ENCODE measurements at regions of chr1 and their contacts with region 1.

Region 1: GRCh38 chr1:242017584-242018233 is 18.8 kb upstream of the MAP1LC3C start:
- DNase-seq: peak in 1 of 2 experiments; percentile 50
- H3K4me3 ChIP-seq: no peak overlapping the region
- H3K27ac ChIP-seq: no peak overlapping the region
- H3K4me1 ChIP-seq: no peaks in the 10 kb centered on the region
- H3K27me3 ChIP-seq: no peaks in the 10 kb centered on the region
- CTCF ChIP-seq: peak; percentile 62

Region 2: GRCh38 chr1:240888039-240888786 is 1129.5 kb before region 1 on chr1:
- CTCF ChIA-PET with region 1: no interaction called
- POLR2A ChIA-PET with region 1: no interaction called
- intact Hi-C with region 1: loop called (anchors 5 kb)
- DNase-seq: peak in 1 of 2 experiments; percentile 47
- H3K4me3 ChIP-seq: no peak overlapping the region
- H3K27ac ChIP-seq: no peak overlapping the region
- H3K4me1 ChIP-seq: no peaks in the 10 kb centered on the region
- H3K27me3 ChIP-seq: no peaks in the 10 kb centered on the region
- CTCF ChIP-seq: peak; percentile 92

Region 3: GRCh38 chr1:241519308-241520079 is 498.2 kb before region 1 on chr1 and contains the start of gene FH:
- CTCF ChIA-PET with region 1: no interaction called
- POLR2A ChIA-PET with region 1: no interaction called
- intact Hi-C with region 1: loop called (anchors 5 kb)
- DNase-seq: peak; percentile 94 to 96
- H3K4me3 ChIP-seq: peak within 1 kb of the TSS; percentile 90
- H3K27ac ChIP-seq: peak within 1 kb of the TSS; percentile 39; the same call in 1 of the 2 replicates
- H3K4me1 ChIP-seq: peaks cover 26% of the 10 kb centered on the region
- H3K27me3 ChIP-seq: no peaks in the 10 kb centered on the region
- CTCF ChIP-seq: no peak
- total RNA-seq, gene FH: 56.1 and 88.3 TPM in 2 replicates

Region 4: GRCh38 chr1:241531195-241532161 is 486.2 kb before region 1 on chr1:
- CTCF ChIA-PET with region 1: no interaction called
- POLR2A ChIA-PET with region 1: no interaction called
- intact Hi-C with region 1: loop called (anchors 2 kb)
- DNase-seq: peak in 1 of 2 experiments; percentile 76
- H3K4me3 ChIP-seq: peak overlapping the region; percentile 44; the same call in 1 of the 2 replicates
- H3K27ac ChIP-seq: no peak overlapping the region
- H3K4me1 ChIP-seq: peaks cover 28% of the 10 kb centered on the region
- H3K27me3 ChIP-seq: no peaks in the 10 kb centered on the region
- CTCF ChIP-seq: peak; percentile 82

Region 5: GRCh38 chr1:241847796-241848685 is 169.7 kb before region 1 on chr1 and contains the start of gene EXO1:
- CTCF ChIA-PET with region 1: no interaction called
- POLR2A ChIA-PET with region 1: no interaction called
- intact Hi-C with region 1: loop called (anchors 5 kb)
- DNase-seq: peak; percentile 82 to 87
- H3K4me3 ChIP-seq: peak within 1 kb of the TSS; percentile 71
- H3K27ac ChIP-seq: peak within 1 kb of the TSS; percentile 87
- H3K4me1 ChIP-seq: peaks cover 17% of the 10 kb centered on the region
- H3K27me3 ChIP-seq: no peaks in the 10 kb centered on the region
- CTCF ChIP-seq: no peak; the same call in 1 of the 2 replicates
- total RNA-seq, gene EXO1: 28.6 and 32.1 TPM in 2 replicates

Region 6: DNA sequence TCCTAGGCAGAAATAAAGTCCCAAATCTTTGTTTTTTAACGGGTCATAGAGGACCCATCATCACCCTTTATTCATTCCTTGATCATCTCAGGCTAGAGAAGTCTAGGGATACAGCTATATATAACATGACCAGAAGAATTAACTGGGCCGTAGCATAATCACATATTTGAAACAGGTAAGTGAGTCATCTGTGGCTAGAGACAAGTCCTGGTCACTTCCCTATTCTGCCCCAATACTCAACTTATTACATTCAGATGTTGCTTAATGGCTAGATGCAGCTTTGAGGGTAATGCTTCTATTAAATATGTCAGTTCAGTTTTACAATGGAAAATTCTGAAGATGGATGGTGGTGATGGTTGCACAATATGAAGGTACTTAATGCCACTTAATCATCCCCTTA is 122.7 kb before region 1 on chr1:
- CTCF ChIA-PET with region 1: no interaction called
- POLR2A ChIA-PET with region 1: no interaction called
- intact Hi-C with region 1: loop called (anchors 1 kb)
- DNase-seq: peak in 1 of 2 experiments; percentile 92
- H3K4me3 ChIP-seq: no peak overlapping the region
- H3K27ac ChIP-seq: peak overlapping the region; percentile 29
- H3K4me1 ChIP-seq: peaks cover 14% of the 10 kb centered on the region; the same call in 1 of the 2 replicates
- H3K27me3 ChIP-seq: no peaks in the 10 kb centered on the region
- CTCF ChIP-seq: no peak

Region 7: DNA sequence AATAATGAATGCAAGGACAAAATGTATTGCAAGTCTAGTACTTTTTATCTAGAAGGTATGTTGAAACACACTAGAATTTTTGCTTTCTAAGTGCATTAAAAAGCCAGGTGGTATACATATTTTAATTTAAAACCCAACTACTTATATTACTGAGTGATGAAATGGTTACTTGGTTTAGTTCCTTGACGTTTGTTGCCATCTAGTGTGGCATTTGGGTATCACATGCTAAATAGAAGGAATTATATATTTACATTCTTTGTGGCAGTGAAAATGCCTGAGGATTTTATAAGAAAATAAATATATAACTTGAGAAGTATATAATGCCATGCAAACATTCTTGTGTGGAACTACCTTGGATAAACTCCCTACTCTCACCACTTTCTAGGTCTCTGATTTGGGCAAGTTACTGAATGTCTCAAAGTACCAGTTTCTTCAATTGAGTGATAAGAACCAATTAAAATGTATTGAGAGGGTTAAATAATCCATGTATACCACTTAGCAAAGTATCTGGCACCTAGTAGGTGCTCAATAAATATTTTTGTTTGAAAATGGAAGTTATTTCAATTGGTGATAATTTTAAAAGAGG is 1307.7 kb after region 1 on chr1:
- CTCF ChIA-PET with region 1: no interaction called
- POLR2A ChIA-PET with region 1: no interaction called
- intact Hi-C with region 1: loop called (anchors 1 kb)
- DNase-seq: peak in 1 of 2 experiments; percentile 44
- H3K4me3 ChIP-seq: no peak overlapping the region
- H3K27ac ChIP-seq: no peak overlapping the region
- H3K4me1 ChIP-seq: no peaks in the 10 kb centered on the region
- H3K27me3 ChIP-seq: no peaks in the 10 kb centered on the region
- CTCF ChIP-seq: peak; percentile 91